Heart left ventricle (tissue), 16 donors: ENCODE measurements at regions of chr2 and their contacts with region 1.

Region 1: GRCh38 chr2:111958901-111959300 is 60.5 kb downstream of the MERTK start:
- DNase-seq: no peak
- ATAC-seq: no peak
- H3K4me3 ChIP-seq: no peak overlapping the region
- H3K27ac ChIP-seq: peak overlapping the region in 8 of 12 donors; percentile 28 to 73 (median 62)
- H3K4me1 ChIP-seq: peaks cover 0 to 46% (median 19%) of the 10 kb centered on the region in 12 donors
- H3K27me3 ChIP-seq: no peaks in the 10 kb centered on the region
- CTCF ChIP-seq: peak in 1 of 12 donors; percentile 30
- POLR2A ChIP-seq: no peak

Region 2: GRCh38 chr2:112010751-112011150 is 51.9 kb after region 1 on chr2:
- intact Hi-C with region 1: loop called in 1 of 10 experiments (anchors 10 kb)
- DNase-seq: no peak
- ATAC-seq: peak in 2 of 4 donors; percentile 30 to 65
- H3K4me3 ChIP-seq: no peak overlapping the region
- H3K27ac ChIP-seq: no peak overlapping the region
- H3K4me1 ChIP-seq: peaks cover 0 to 6% (median 0%) of the 10 kb centered on the region in 12 donors
- H3K27me3 ChIP-seq: no peaks in the 10 kb centered on the region
- CTCF ChIP-seq: no peak
- POLR2A ChIP-seq: no peak

Region 3: GRCh38 chr2:112048887-112049286 is 90.0 kb after region 1 on chr2:
- intact Hi-C with region 1: loop called in 1 of 10 experiments (anchors 10 kb)
- DNase-seq: no peak
- ATAC-seq: peak; percentile 39 to 78 (median 71)
- H3K4me3 ChIP-seq: no peak overlapping the region
- H3K27ac ChIP-seq: peak overlapping the region in 1 of 12 donors; percentile 27
- H3K4me1 ChIP-seq: peaks cover 0 to 31% (median 14%) of the 10 kb centered on the region in 12 donors
- H3K27me3 ChIP-seq: no peaks in the 10 kb centered on the region
- CTCF ChIP-seq: peak; percentile 78 to 98 (median 84)
- POLR2A ChIP-seq: no peak